HCT116 (cell line): ENCODE measurements at regions of chr12 and their contacts with region 1.

Region 1: DNA sequence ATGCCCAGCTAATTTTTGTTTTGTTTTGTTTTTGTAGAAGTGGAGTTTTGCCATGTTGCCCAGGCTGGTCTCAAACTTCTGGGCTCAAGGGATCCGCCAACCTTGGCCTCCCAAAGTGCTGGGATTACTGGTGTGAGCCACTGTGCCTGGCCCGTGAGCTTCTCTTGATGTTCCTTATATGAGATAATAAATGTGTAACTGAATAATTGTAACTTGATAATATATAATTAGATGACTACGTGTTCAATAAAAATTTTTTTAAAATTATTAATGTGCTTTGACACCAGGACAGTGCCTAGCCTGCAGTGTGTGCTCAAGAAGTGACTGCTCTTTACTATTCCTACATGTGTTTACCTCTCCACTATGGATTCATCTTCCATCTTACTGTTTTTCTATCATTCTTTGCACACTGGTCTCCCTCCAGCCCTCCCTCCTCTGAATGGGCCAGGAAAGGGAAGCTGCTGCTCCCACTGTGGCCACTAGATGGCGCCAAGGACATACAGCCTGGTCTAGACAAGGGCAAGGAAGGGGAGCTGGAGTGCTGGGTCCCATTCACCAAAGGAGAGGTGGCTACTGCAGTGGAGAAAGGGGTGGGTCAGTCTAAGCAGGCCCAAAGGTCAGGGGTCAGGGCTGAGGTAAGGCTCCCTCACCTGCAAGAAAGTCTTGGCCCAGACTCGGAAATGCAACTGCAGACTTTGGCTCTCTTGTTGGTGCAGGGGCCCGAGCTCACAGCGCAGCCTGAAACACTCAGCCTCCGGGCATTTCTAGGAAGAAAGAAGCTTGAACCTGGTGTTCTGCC is 14.7 kb upstream of the ZNF385A start:
- DNase-seq: peak; percentile 48
- ATAC-seq: peak; percentile 95
- H3K4me3 ChIP-seq: no peak overlapping the region
- H3K27ac ChIP-seq: no peak overlapping the region
- H3K4me1 ChIP-seq: no peaks in the 10 kb centered on the region
- H3K27me3 ChIP-seq: no peaks in the 10 kb centered on the region
- CTCF ChIP-seq: peak; percentile 91 to 99 (median 99)
- POLR2A ChIP-seq: no peak
- RAD21 ChIP-seq: peak; percentile 93

Region 2: DNA sequence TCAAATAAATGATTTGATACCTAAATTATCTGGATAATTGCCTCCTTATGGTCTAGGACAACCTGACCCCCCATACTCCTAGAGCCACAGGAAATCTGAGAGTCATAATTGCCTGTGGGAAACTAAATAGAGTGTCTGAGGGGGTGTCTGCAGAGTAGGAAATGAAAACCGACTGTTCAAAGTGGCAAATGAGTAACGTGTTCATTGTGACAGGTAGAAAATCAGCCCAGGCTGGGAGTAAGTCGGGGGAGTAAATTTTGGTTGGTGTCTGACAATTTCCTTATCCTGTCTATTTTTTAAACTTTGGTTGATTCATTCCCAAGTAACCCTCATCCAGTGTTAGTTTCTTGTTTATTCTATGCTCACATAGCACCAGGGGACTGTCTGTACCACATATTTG is 512.2 kb before region 1 on chr12:
- CTCF ChIA-PET with region 1: no interaction called
- POLR2A ChIA-PET with region 1: no interaction called
- RAD21 ChIA-PET with region 1: no interaction called
- intact Hi-C with region 1: no loop called
- DNase-seq: no peak
- ATAC-seq: no peak
- H3K4me3 ChIP-seq: no peak overlapping the region
- H3K27ac ChIP-seq: no peak overlapping the region
- H3K4me1 ChIP-seq: no peaks in the 10 kb centered on the region
- H3K27me3 ChIP-seq: no peaks in the 10 kb centered on the region
- CTCF ChIP-seq: no peak
- POLR2A ChIP-seq: no peak
- RAD21 ChIP-seq: no peak

Region 3: DNA sequence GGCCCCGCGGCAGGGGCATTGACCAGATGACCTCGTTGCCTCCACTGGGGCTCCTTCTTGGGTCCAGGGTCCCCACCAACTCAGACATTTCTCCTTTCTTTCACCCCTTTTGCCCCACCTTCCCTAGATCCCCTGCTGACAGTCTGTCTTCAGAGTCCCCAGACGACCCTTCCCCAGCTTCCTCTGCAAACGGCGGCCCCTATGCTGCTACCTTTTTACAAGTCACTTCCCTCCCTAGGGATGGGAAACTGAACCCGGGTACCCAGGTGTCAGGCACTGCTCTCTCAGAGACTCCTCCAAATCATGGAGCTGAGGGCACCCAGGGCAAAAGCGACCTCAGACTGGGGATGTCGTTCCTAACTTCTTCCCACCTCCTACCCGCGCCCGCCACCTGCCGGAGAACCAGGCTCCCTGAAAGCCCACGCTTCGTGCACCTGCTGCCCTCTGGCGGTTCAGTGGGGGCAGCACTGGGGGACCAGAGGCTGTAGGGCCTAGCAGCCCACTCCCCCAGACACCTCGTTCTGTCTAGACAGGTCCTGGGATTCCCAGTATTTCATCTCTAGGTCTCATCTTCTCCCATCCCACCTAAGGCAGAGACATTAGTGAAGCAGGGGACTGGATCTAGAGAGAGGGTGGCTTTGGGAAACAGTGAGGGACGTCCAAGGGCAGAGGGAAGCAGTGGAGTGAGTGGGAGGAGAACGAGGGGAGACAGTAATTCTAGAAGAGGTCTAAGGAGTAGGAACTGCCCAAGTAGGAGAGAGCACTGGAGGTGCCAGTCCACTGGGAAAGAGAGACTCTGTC is 19.6 kb before region 1 on chr12:
- CTCF ChIA-PET with region 1: interaction called, 28 read pairs
- POLR2A ChIA-PET with region 1: no interaction called
- RAD21 ChIA-PET with region 1: no interaction called
- intact Hi-C with region 1: no loop called
- DNase-seq: peak; percentile 74
- ATAC-seq: peak; percentile 83
- H3K4me3 ChIP-seq: peak overlapping the region; percentile 45 to 66
- H3K27ac ChIP-seq: peak overlapping the region; percentile 77
- H3K4me1 ChIP-seq: peaks cover 21 to 59% of the 10 kb centered on the region in 2 experiments
- H3K27me3 ChIP-seq: no peaks in the 10 kb centered on the region
- CTCF ChIP-seq: peak in 2 of 3 experiments; percentile 100; a peak in 4 of 6 replicates
- POLR2A ChIP-seq: no peak
- RAD21 ChIP-seq: no peak

Region 4: GRCh38 chr12:54411391-54412241 is 12.4 kb after region 1 on chr12:
- CTCF ChIA-PET with region 1: interaction called, 41 read pairs
- POLR2A ChIA-PET with region 1: interaction called, 4 read pairs
- RAD21 ChIA-PET with region 1: no interaction called
- intact Hi-C with region 1: no loop called
- DNase-seq: no peak
- ATAC-seq: peak; percentile 78
- H3K4me3 ChIP-seq: no peak overlapping the region
- H3K27ac ChIP-seq: no peak overlapping the region
- H3K4me1 ChIP-seq: peaks cover 0 to 20% of the 10 kb centered on the region in 2 experiments; a peak in 2 of 4 replicates
- H3K27me3 ChIP-seq: no peaks in the 10 kb centered on the region
- CTCF ChIP-seq: no peak
- POLR2A ChIP-seq: no peak
- RAD21 ChIP-seq: no peak

Region 5: GRCh38 chr12:54431911-54432814 is 33.0 kb after region 1 on chr12:
- CTCF ChIA-PET with region 1: interaction called, 182 read pairs
- POLR2A ChIA-PET with region 1: no interaction called
- RAD21 ChIA-PET with region 1: interaction called in 1 of 2 experiments, 3 read pairs
- intact Hi-C with region 1: no loop called
- DNase-seq: no peak
- ATAC-seq: peak; percentile 63
- H3K4me3 ChIP-seq: no peak overlapping the region
- H3K27ac ChIP-seq: no peak overlapping the region
- H3K4me1 ChIP-seq: peaks cover 7 to 16% of the 10 kb centered on the region in 2 experiments
- H3K27me3 ChIP-seq: no peaks in the 10 kb centered on the region
- CTCF ChIP-seq: no peak
- POLR2A ChIP-seq: no peak
- RAD21 ChIP-seq: no peak

Region 6: DNA sequence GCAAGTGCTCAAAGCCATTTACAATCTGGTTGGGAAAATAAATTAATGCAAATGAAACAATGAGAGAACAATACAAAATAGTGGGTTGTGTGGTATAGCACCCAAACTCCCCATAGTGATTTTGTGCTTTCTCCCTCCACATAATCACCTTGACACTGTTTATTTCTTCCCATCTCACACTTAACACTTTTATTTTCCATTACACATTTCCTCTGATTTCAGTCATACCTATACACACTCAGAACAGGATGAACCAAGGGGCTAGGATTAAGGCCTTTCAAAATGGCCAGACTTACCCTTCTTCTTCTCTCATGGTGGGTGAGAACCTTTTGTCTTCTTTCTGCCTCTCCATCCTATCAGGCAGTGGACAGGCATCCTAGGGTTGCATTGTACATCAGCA is 136.3 kb after region 1 on chr12:
- CTCF ChIA-PET with region 1: no interaction called
- POLR2A ChIA-PET with region 1: no interaction called
- RAD21 ChIA-PET with region 1: no interaction called
- intact Hi-C with region 1: no loop called
- DNase-seq: no peak
- ATAC-seq: no peak
- H3K4me3 ChIP-seq: no peak overlapping the region
- H3K27ac ChIP-seq: no peak overlapping the region
- H3K4me1 ChIP-seq: no peaks in the 10 kb centered on the region
- H3K27me3 ChIP-seq: peaks cover 39% of the 10 kb centered on the region
- CTCF ChIP-seq: no peak
- POLR2A ChIP-seq: no peak
- RAD21 ChIP-seq: no peak